B cell (primary cell): ENCODE measurements at regions of chr17 and their contacts with region 1.

Region 1: DNA sequence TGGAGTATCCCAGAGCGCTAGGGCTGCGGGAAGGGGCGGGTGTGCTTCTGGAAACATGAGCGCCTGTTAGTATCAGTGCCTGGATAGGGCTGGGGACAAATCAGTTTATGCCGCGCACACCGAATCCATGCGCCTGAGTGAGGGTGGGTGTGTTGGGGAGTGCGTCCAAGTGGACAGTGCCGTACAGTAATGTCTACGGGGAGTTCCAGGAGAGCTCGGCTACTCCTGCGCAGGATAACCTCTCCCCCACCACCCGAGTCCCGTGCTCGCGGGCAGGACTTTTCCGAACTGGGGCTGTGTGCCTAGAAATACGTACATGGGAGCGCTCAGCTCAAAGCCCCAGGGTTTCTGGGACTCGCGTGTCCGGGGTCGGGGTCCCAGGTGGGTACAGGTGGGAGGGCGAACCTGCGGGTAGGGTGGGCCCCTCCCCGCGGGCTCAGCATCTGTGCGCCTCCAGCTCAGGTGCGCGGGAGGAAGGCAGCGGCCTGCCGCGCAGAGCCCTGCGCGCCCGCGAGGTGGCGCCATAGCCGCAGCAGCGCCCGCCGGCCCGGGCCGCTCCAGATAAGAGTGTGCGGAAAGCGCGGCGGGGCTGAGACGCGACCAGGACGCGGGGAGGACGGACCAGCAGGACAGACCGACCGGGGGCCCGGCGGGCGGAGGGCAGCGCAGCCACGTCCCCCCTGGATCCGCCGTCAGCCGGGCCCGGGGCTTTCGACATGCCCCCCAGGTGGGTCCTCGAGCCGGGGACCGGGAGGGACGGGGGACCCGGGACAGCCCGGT is at the start of gene HIC1:
- DNase-seq: peak; percentile 89
- ATAC-seq: peak; percentile 38
- H3K4me3 ChIP-seq: peak within 1 kb of the TSS in 3 of 5 experiments; percentile 44 to 57 (median 52)
- H3K4me3 Mint-ChIP-seq: peak within 1 kb of the TSS; percentile 80
- H3K27ac ChIP-seq: no peak within 1 kb of the TSS
- H3K27ac Mint-ChIP-seq: peak within 1 kb of the TSS; percentile 67
- H3K4me1 ChIP-seq: peaks cover 55 to 75% of the 10 kb centered on the region in 2 donors
- H3K4me1 Mint-ChIP-seq: peaks cover 36% of the 10 kb centered on the region
- H3K27me3 ChIP-seq: peaks cover 0 to 59% (median 14%) of the 10 kb centered on the region in 4 experiments
- H3K27me3 Mint-ChIP-seq: peaks cover 7% of the 10 kb centered on the region
- CTCF ChIP-seq: peak; percentile 95
- total RNA-seq, gene HIC1: 1.5 and 1.9 TPM in 2 replicates

Region 2: GRCh38 chr17:1431631-1432104 is 623.0 kb before region 1 on chr17:
- CTCF ChIA-PET with region 1: no interaction called
- POLR2A ChIA-PET with region 1: interaction called, 11 read pairs
- intact Hi-C with region 1: no loop called
- DNase-seq: no peak
- ATAC-seq: no peak
- H3K4me3 ChIP-seq: no peak overlapping the region
- H3K4me3 Mint-ChIP-seq: no peak overlapping the region
- H3K27ac ChIP-seq: no peak overlapping the region
- H3K27ac Mint-ChIP-seq: no peak overlapping the region
- H3K4me1 ChIP-seq: no peaks in the 10 kb centered on the region
- H3K4me1 Mint-ChIP-seq: peaks cover 14% of the 10 kb centered on the region
- H3K27me3 ChIP-seq: no peaks in the 10 kb centered on the region
- H3K27me3 Mint-ChIP-seq: no peaks in the 10 kb centered on the region
- CTCF ChIP-seq: no peak

Region 3: GRCh38 chr17:2011411-2012371 is 43.0 kb before region 1 on chr17:
- CTCF ChIA-PET with region 1: no interaction called
- POLR2A ChIA-PET with region 1: no interaction called
- intact Hi-C with region 1: no loop called
- DNase-seq: no peak
- ATAC-seq: no peak
- H3K4me3 ChIP-seq: no peak overlapping the region
- H3K4me3 Mint-ChIP-seq: no peak overlapping the region
- H3K27ac ChIP-seq: no peak overlapping the region
- H3K27ac Mint-ChIP-seq: no peak overlapping the region
- H3K4me1 ChIP-seq: no peaks in the 10 kb centered on the region
- H3K4me1 Mint-ChIP-seq: no peaks in the 10 kb centered on the region
- H3K27me3 ChIP-seq: peaks cover 0 to 21% (median 1%) of the 10 kb centered on the region in 4 experiments
- H3K27me3 Mint-ChIP-seq: peaks cover 42% of the 10 kb centered on the region
- CTCF ChIP-seq: no peak

Region 4: DNA sequence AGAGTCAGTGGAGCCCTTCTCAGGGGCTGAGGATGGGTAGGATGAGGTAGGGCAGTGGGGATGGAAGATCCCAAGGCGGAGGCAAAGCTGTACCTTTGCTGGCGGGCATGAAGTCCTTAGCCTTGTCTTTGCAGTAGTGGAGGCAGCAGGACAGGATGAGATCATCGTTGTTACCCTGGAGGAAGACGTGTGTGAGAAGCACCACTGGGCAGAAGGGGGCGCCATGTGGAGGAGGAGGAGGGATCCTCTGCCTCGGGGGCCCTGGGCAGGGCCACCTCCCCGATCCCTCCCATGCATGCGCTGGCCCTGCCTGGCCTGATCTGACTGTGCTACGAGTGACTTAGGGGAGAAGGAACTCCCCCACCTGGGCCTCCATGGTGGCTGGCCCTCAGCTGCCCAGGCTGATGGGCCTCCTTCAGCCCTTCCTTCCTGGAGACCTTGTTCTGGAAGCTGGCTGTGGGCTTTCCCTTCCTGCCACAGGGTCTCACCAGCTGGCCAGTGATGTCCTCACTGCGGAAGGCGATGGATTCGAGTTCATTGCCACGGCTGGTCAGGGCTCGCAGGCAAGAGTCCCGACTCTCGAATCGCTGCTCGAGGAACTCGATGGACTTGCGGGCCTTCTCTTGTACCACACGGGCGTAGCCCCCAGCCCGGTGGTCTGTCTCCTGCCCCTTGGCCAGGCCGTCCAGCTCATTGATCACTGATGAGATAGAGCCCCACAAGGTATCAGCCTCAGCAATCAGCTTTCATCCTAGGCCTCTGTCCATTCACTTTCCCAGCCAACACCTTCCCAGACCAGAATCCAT is 10.5 kb after region 1 on chr17:
- CTCF ChIA-PET with region 1: interaction called, 28 read pairs
- POLR2A ChIA-PET with region 1: no interaction called
- intact Hi-C with region 1: no loop called
- DNase-seq: peak; percentile 40
- ATAC-seq: peak; percentile 21
- H3K4me3 ChIP-seq: no peak overlapping the region
- H3K4me3 Mint-ChIP-seq: peak overlapping the region; percentile 61
- H3K27ac ChIP-seq: peak overlapping the region; percentile 41 to 64
- H3K27ac Mint-ChIP-seq: peak overlapping the region; percentile 86
- H3K4me1 ChIP-seq: peaks cover 20 to 34% of the 10 kb centered on the region in 2 donors
- H3K4me1 Mint-ChIP-seq: peaks cover 42% of the 10 kb centered on the region
- H3K27me3 ChIP-seq: peaks cover 0 to 1% (median 0%) of the 10 kb centered on the region in 4 experiments
- H3K27me3 Mint-ChIP-seq: no peaks in the 10 kb centered on the region
- CTCF ChIP-seq: peak; percentile 20

Region 5: DNA sequence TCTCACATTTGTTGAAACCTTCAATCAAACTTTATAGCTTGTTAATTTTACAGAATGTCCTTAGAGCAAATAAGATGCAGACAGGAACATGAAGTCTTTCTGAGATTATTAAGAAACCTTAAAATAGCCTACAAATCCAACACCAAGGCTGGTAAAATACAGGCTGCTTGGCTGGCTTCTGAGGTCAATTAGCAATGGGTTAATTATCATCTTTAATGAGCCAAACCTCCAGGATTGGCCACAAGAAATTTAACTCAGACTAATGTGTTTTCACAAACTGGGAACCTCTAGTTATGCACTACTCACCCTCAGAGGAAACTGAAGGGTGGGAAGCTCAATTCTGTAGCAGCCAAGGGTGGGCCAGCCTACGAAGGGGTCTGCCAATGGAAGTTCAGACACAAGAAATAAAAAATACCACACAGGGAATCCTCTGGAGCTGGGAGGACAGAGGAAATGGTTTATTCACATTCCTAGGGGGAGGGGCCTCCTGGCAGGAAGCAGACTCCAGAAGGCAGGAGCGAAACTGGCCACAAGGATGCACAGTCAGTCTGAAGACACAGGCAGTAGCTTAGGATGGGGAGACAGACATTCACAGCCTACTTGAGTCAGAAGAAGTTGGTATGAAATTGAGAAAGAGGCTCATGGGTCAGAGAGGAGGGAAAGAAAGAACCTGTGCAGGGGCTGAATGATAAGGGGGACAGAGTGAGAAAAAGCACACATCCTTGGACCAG is 36.3 kb after region 1 on chr17:
- CTCF ChIA-PET with region 1: interaction called, 92 read pairs
- POLR2A ChIA-PET with region 1: interaction called, 10 read pairs
- intact Hi-C with region 1: loop called (anchors 1 kb)
- DNase-seq: no peak
- ATAC-seq: no peak
- H3K4me3 ChIP-seq: no peak overlapping the region
- H3K4me3 Mint-ChIP-seq: peak overlapping the region; percentile 92
- H3K27ac ChIP-seq: no peak overlapping the region
- H3K27ac Mint-ChIP-seq: peak overlapping the region; percentile 51
- H3K4me1 ChIP-seq: peaks cover 45 to 51% of the 10 kb centered on the region in 2 donors
- H3K4me1 Mint-ChIP-seq: peaks cover 52% of the 10 kb centered on the region
- H3K27me3 ChIP-seq: no peaks in the 10 kb centered on the region
- H3K27me3 Mint-ChIP-seq: no peaks in the 10 kb centered on the region
- CTCF ChIP-seq: no peak

Region 6: GRCh38 chr17:2170023-2170422 is 115.3 kb after region 1 on chr17:
- CTCF ChIA-PET with region 1: interaction called, 49 read pairs
- POLR2A ChIA-PET with region 1: interaction called, 5 read pairs
- intact Hi-C with region 1: loop called (anchors 1 kb)
- DNase-seq: peak; percentile 48
- ATAC-seq: no peak
- H3K4me3 ChIP-seq: no peak overlapping the region
- H3K4me3 Mint-ChIP-seq: no peak overlapping the region
- H3K27ac ChIP-seq: no peak overlapping the region
- H3K27ac Mint-ChIP-seq: no peak overlapping the region
- H3K4me1 ChIP-seq: no peaks in the 10 kb centered on the region
- H3K4me1 Mint-ChIP-seq: no peaks in the 10 kb centered on the region
- H3K27me3 ChIP-seq: no peaks in the 10 kb centered on the region
- H3K27me3 Mint-ChIP-seq: no peaks in the 10 kb centered on the region
- CTCF ChIP-seq: peak; percentile 29

Region 7: DNA sequence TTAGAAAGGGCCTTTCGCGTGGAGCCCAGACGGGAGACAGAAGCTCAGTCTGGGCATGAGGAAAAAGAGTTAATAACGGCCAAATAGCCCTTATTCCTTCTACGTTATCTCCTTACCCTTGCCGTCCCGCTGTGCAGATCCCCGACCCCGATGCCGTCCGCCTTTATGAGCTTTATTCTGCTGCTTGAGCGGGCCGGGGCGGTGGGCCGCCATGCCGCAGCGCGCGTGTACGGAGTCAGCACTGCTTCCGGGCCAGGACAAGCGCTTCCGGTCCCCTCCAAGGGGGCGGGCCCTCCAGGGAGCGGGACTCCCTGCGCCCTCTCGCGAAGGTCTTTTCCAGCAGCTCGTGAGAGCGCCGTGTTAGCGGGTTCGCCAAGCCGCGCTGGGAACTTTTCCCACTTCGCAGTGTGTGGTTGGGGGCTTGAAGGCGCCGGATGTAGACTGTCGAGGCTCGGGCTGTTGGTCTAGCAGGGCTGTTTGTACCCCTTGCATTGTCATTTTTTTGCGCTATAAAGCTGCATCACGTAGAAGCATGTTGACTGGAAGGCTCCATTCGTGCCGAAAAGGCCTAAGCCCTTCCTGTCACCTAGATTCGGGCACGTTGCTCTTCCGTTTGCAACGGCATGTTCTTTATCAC is 281.6 kb after region 1 on chr17 and contains the start of gene TSR1:
- CTCF ChIA-PET with region 1: interaction called, 3 read pairs
- POLR2A ChIA-PET with region 1: no interaction called
- intact Hi-C with region 1: loop called (anchors 5 kb)
- DNase-seq: peak; percentile 90
- ATAC-seq: peak; percentile 81
- H3K4me3 ChIP-seq: peak within 1 kb of the TSS; percentile 77 to 87 (median 82)
- H3K4me3 Mint-ChIP-seq: peak within 1 kb of the TSS; percentile 100
- H3K27ac ChIP-seq: peak within 1 kb of the TSS in 1 of 2 donors; percentile 64
- H3K27ac Mint-ChIP-seq: peak within 1 kb of the TSS; percentile 95
- H3K4me1 ChIP-seq: peaks cover 9 to 25% of the 10 kb centered on the region in 2 donors
- H3K4me1 Mint-ChIP-seq: peaks cover 24% of the 10 kb centered on the region
- H3K27me3 ChIP-seq: no peaks in the 10 kb centered on the region
- H3K27me3 Mint-ChIP-seq: no peaks in the 10 kb centered on the region
- CTCF ChIP-seq: no peak
- total RNA-seq, gene TSR1: 29.8 and 31.5 TPM in 2 replicates